ENCODE measurements at regions of chr12 and their contacts with region 1.

Region 1: DNA sequence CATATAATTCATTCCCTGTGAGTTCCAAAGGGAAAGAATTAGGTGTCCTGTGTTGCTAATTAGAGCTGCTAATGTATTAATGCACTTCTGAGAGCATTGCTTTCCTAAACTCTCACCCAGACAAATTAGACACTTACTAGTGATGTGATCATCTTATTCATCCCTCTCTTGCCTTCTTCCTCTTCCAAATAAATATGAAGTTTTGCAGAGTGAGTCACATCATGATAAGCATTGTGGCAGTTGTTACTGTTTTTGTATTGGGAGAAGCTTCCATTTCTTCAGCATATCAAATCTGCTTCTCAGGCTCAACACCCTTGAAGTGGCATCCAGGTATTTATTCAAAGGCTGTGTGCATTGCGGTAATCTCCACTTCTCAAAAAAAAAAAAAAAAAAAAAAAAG is 37.3 kb upstream of the E2F7 start:
- DNase-seq: peak; percentile 79
- ATAC-seq: peak; percentile 87
- H3K4me3 ChIP-seq: no peak overlapping the region
- H3K27ac ChIP-seq: no peak overlapping the region
- H3K4me1 ChIP-seq: peaks cover 5% of the 10 kb centered on the region; the same call in 1 of the 2 replicates
- H3K27me3 ChIP-seq: no peaks in the 10 kb centered on the region
- CTCF ChIP-seq: no peak
- POLR2A ChIP-seq: no peak
- RAD21 ChIP-seq: no peak

Region 2: GRCh38 chr12:77049767-77050353 is 52.8 kb before region 1 on chr12:
- CTCF ChIA-PET with region 1: no interaction called
- POLR2A ChIA-PET with region 1: no interaction called
- dilution Hi-C with region 1: no loop called
- in situ Hi-C with region 1: no loop called
- intact Hi-C with region 1: no loop called
- DNase-seq: peak; percentile 70
- ATAC-seq: peak; percentile 80
- H3K4me3 ChIP-seq: no peak overlapping the region
- H3K27ac ChIP-seq: no peak overlapping the region
- H3K4me1 ChIP-seq: no peaks in the 10 kb centered on the region
- H3K27me3 ChIP-seq: no peaks in the 10 kb centered on the region
- CTCF ChIP-seq: peak; percentile 69
- POLR2A ChIP-seq: no peak
- RAD21 ChIP-seq: peak; percentile 71

Region 3: GRCh38 chr12:77122236-77122635 is 19.5 kb after region 1 on chr12:
- CTCF ChIA-PET with region 1: no interaction called
- POLR2A ChIA-PET with region 1: no interaction called
- dilution Hi-C with region 1: no loop called
- in situ Hi-C with region 1: no loop called
- intact Hi-C with region 1: loop called (anchors 2 kb)
- DNase-seq: peak; percentile 97
- ATAC-seq: peak; percentile 89
- H3K4me3 ChIP-seq: no peak overlapping the region
- H3K27ac ChIP-seq: peak overlapping the region; percentile 34; the same call in 1 of the 2 replicates
- H3K4me1 ChIP-seq: peaks cover 9% of the 10 kb centered on the region
- H3K27me3 ChIP-seq: no peaks in the 10 kb centered on the region
- CTCF ChIP-seq: no peak
- POLR2A ChIP-seq: peak; percentile 27; the same call in 1 of the 2 replicates
- RAD21 ChIP-seq: peak; percentile 21; the same call in 1 of the 2 replicates